CD8-positive, alpha-beta memory T cell (primary cell): ENCODE measurements at regions of chr9 and their contacts with region 1.

Region 1: GRCh38 chr9:133121198-133121939 is at the start of gene RALGDS:
- DNase-seq: peak; percentile 85 to 93 (median 90)
- H3K4me3 ChIP-seq: peak within 1 kb of the TSS; percentile 53
- H3K4me3 Mint-ChIP-seq: peak within 1 kb of the TSS; percentile 54 to 88 (median 78)
- H3K27ac ChIP-seq: peak within 1 kb of the TSS; percentile 75
- H3K27ac Mint-ChIP-seq: peak within 1 kb of the TSS; percentile 95 to 100 (median 98)
- H3K4me1 ChIP-seq: peaks cover 61% of the 10 kb centered on the region
- H3K4me1 Mint-ChIP-seq: peaks cover 59 to 95% (median 64%) of the 10 kb centered on the region in 3 donors
- H3K27me3 ChIP-seq: no peaks in the 10 kb centered on the region
- H3K27me3 Mint-ChIP-seq: no peaks in the 10 kb centered on the region
- total RNA-seq, gene RALGDS: 59.1 to 67.8 TPM

Region 2: DNA sequence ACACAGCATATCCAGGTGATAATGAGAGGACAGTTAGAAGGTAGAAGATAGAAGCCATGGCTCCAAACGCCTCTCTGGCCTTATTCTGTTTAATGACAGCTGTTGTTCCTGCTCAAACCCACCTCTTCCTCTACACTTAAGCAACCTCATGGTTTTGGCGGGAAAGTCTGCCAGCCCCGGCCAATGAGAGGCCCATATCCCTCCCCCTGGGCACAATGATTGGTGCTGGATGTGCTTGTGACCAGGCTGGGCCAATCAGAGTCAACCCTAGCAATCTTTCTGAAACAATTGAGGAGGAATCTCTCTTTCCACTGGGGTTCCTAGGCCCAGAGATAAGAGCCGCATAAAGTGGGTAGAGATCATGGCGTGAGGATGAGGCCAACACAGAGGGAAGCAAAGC is 147.7 kb before region 1 on chr9:
- CTCF ChIA-PET with region 1: no interaction called
- POLR2A ChIA-PET with region 1: no interaction called
- DNase-seq: no peak
- H3K4me3 ChIP-seq: no peak overlapping the region
- H3K4me3 Mint-ChIP-seq: no peak overlapping the region
- H3K27ac ChIP-seq: no peak overlapping the region
- H3K27ac Mint-ChIP-seq: no peak overlapping the region
- H3K4me1 ChIP-seq: peaks cover 5% of the 10 kb centered on the region
- H3K4me1 Mint-ChIP-seq: peaks cover 2 to 5% (median 3%) of the 10 kb centered on the region in 3 donors
- H3K27me3 ChIP-seq: peaks cover 4% of the 10 kb centered on the region
- H3K27me3 Mint-ChIP-seq: peaks cover 17 to 57% of the 10 kb centered on the region in 2 donors

Region 3: GRCh38 chr9:133103183-133103986 is 18.0 kb before region 1 on chr9:
- CTCF ChIA-PET with region 1: interaction called, 20 read pairs
- POLR2A ChIA-PET with region 1: no interaction called
- DNase-seq: peak; percentile 31 to 72 (median 53)
- H3K4me3 ChIP-seq: no peak overlapping the region
- H3K4me3 Mint-ChIP-seq: no peak overlapping the region
- H3K27ac ChIP-seq: no peak overlapping the region
- H3K27ac Mint-ChIP-seq: peak overlapping the region; percentile 24 to 96 (median 88)
- H3K4me1 ChIP-seq: no peaks in the 10 kb centered on the region
- H3K4me1 Mint-ChIP-seq: peaks cover 0 to 3% (median 0%) of the 10 kb centered on the region in 3 donors
- H3K27me3 ChIP-seq: no peaks in the 10 kb centered on the region
- H3K27me3 Mint-ChIP-seq: no peaks in the 10 kb centered on the region

Region 4: GRCh38 chr9:133133681-133134418 is 12.5 kb after region 1 on chr9:
- CTCF ChIA-PET with region 1: interaction called, 13 read pairs
- POLR2A ChIA-PET with region 1: interaction called, 11 read pairs
- DNase-seq: peak; percentile 85 to 97 (median 88)
- H3K4me3 ChIP-seq: peak overlapping the region; percentile 35
- H3K4me3 Mint-ChIP-seq: peak overlapping the region; percentile 76 to 96 (median 84)
- H3K27ac ChIP-seq: peak overlapping the region; percentile 100
- H3K27ac Mint-ChIP-seq: peak overlapping the region; percentile 100
- H3K4me1 ChIP-seq: peaks cover 88% of the 10 kb centered on the region
- H3K4me1 Mint-ChIP-seq: peaks cover 62 to 83% (median 66%) of the 10 kb centered on the region in 3 donors
- H3K27me3 ChIP-seq: no peaks in the 10 kb centered on the region
- H3K27me3 Mint-ChIP-seq: peaks cover 0 to 2% of the 10 kb centered on the region in 2 donors

Region 5: DNA sequence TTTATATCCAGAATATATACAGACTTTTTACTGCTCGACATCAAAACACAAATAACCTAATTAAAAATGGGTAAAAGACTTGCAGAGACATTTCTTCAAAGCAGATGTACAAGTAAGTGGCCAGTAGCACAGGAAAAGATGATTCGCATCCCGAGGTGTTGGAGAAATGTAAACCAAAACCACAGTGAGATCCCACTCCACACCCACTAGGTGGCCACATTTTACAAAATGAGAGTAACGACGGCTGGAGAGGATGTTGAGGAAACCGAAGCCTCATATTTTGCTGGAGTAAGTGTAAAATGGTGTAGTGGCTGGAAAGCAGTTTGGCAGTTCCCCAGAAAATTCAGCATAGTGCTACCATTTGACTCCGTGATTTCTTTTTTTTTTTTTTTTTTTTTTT is 63.6 kb after region 1 on chr9:
- CTCF ChIA-PET with region 1: no interaction called
- POLR2A ChIA-PET with region 1: no interaction called
- DNase-seq: peak in 4 of 5 donors; percentile 13 to 55 (median 32)
- H3K4me3 ChIP-seq: no peak overlapping the region
- H3K4me3 Mint-ChIP-seq: peak overlapping the region in 1 of 7 donors; percentile 46
- H3K27ac ChIP-seq: no peak overlapping the region
- H3K27ac Mint-ChIP-seq: peak overlapping the region in 1 of 8 donors; percentile 9
- H3K4me1 ChIP-seq: peaks cover 10% of the 10 kb centered on the region
- H3K4me1 Mint-ChIP-seq: peaks cover 12 to 14% (median 13%) of the 10 kb centered on the region in 3 donors
- H3K27me3 ChIP-seq: peaks cover 19% of the 10 kb centered on the region
- H3K27me3 Mint-ChIP-seq: peaks cover 22 to 46% of the 10 kb centered on the region in 2 donors

Region 6: DNA sequence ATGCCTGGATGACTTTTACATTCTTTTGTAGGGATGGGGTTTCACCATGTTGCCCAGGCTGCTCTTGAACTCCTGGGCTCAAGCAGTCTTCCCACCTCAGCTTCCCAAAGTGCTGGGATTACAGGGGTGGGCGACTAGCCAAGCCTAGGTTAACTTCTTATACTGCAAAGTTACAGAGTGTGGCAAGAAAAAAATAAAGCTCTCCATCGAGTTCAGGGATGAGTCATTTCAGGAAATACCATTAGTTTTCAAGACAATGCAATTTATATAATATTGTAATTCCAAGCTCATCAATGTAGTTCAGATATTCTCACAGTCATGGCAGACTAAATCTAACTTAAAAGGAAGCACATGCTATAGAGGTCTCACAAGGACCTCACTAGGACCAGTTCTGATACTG is 165.2 kb after region 1 on chr9:
- CTCF ChIA-PET with region 1: no interaction called
- POLR2A ChIA-PET with region 1: no interaction called
- DNase-seq: no peak
- H3K4me3 ChIP-seq: no peak overlapping the region
- H3K4me3 Mint-ChIP-seq: no peak overlapping the region
- H3K27ac ChIP-seq: no peak overlapping the region
- H3K27ac Mint-ChIP-seq: peak overlapping the region in 1 of 8 donors; percentile 69
- H3K4me1 ChIP-seq: no peaks in the 10 kb centered on the region
- H3K4me1 Mint-ChIP-seq: no peaks in the 10 kb centered on the region
- H3K27me3 ChIP-seq: no peaks in the 10 kb centered on the region
- H3K27me3 Mint-ChIP-seq: peaks cover 7 to 10% of the 10 kb centered on the region in 2 donors